ENCODE measurements at regions of chr12 and their contacts with region 1.

Region 1: DNA sequence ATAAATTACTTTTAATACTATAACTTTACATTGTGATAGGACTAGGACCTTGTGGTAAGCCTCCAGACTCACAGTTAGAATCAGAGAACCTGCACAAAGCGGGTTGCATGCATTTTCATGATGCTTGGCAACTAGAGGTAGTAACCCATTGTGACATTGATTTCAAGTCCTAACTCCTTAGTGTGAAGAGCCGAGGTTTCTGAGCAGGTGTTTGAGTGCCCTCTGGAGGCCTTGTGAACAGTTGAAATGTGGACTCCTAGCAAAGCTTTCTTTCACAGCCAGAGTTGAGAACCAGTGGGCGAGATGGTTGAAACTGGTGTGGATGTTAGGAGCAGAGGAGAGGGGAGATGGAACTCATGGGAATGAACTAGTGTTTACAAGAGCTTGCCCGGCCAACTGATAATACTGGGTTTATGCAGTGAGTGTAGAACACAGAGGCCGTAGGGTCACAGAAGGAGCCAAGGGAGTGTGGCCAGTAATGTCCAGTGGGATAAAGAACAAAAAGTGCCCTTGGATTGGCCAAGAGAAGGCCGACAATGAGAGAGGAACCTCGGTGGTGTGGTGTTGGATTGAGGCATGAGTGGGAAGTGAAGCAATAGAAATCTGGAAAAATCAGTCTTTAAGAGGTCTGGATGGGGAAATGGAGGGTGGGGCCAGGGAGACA is 10.9 kb downstream of the ZNF664 start:
- DNase-seq: peak; percentile 41
- H3K4me3 ChIP-seq: no peak overlapping the region
- H3K27ac ChIP-seq: no peak overlapping the region
- H3K4me1 ChIP-seq: peaks cover 0 to 8% of the 10 kb centered on the region in 2 experiments; a peak in 1 of 4 replicates
- H3K27me3 ChIP-seq: no peaks in the 10 kb centered on the region
- CTCF ChIP-seq: peak; percentile 71
- EP300 ChIP-seq: no peak
- RAD21 ChIP-seq: peak; percentile 84

Region 2: DNA sequence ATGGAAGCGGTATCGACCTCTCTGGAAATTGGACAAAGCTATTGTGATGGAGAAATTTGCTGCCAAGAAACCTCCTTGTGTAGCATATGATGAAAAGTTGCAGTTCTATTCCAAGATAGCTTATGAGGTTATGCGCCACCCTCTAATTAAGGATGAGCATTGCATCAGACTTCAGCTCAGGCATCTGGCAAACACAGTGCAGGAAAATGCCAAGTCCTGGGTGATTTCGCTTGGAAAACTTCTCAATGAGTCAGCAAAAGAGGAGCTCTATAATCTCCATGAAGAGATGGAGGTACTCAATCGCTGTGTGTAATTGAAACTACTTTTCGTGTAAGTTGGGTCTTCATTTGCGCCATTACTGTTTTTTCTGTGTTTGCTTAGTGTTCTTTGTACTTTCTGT is 170.6 kb before region 1 on chr12:
- CTCF ChIA-PET with region 1: no interaction called
- POLR2A ChIA-PET with region 1: no interaction called
- DNase-seq: no peak
- H3K4me3 ChIP-seq: no peak overlapping the region
- H3K27ac ChIP-seq: no peak overlapping the region
- H3K4me1 ChIP-seq: no peaks in the 10 kb centered on the region
- H3K27me3 ChIP-seq: no peaks in the 10 kb centered on the region
- CTCF ChIP-seq: no peak
- EP300 ChIP-seq: no peak
- RAD21 ChIP-seq: no peak

Region 3: GRCh38 chr12:123839826-123840225 is 144.1 kb before region 1 on chr12:
- CTCF ChIA-PET with region 1: no interaction called
- POLR2A ChIA-PET with region 1: no interaction called
- DNase-seq: peak; percentile 80
- H3K4me3 ChIP-seq: no peak overlapping the region
- H3K27ac ChIP-seq: peak overlapping the region in 1 of 2 experiments; percentile 11; a peak in 1 of 4 replicates
- H3K4me1 ChIP-seq: no peaks in the 10 kb centered on the region
- H3K27me3 ChIP-seq: no peaks in the 10 kb centered on the region
- CTCF ChIP-seq: no peak
- EP300 ChIP-seq: peak in 1 of 2 experiments; percentile 76; a peak in 2 of 4 replicates
- RAD21 ChIP-seq: peak; percentile 10; the same call in 1 of the 2 replicates

Region 4: GRCh38 chr12:123905319-123905925 is 78.5 kb before region 1 on chr12:
- CTCF ChIA-PET with region 1: interaction called, 21 read pairs
- POLR2A ChIA-PET with region 1: no interaction called
- DNase-seq: peak; percentile 74
- H3K4me3 ChIP-seq: no peak overlapping the region
- H3K27ac ChIP-seq: no peak overlapping the region
- H3K4me1 ChIP-seq: peaks cover 0 to 6% of the 10 kb centered on the region in 2 experiments; a peak in 1 of 4 replicates
- H3K27me3 ChIP-seq: no peaks in the 10 kb centered on the region
- CTCF ChIP-seq: peak; percentile 78
- EP300 ChIP-seq: no peak
- RAD21 ChIP-seq: peak; percentile 57

Region 5: DNA sequence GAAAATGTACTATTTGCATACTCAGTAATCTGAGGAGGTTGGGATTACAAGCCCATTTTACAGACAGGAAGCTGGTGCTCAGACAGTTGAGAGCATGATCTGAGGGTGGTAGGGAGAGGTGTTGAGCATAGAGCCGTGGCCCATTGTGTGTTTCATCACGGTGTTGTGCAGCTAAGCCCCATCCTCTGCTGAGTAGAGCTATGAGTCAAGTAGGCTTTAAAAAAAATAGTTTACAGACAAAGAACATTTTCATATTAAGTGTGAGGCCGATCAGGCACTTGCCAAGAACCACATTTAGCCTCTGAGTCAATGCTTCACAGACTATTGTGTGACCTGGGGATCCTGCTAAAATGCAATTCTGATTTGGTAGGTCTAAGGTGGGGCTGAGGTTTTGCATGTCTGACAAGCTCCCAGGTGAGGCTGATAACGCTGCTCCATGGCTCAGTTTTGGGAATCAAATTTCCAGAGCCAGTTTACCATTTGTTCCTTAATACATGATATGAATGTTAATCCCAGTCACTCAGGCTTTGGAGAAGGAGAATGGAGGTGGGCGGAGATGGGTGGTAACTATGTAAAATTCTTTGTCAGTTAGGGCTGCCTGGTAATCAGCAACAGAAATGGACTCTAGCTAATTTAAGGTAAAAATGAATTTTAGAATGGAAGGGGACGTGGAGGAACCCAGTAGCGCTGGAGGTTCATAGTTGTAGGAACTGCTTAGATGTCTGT is 11.2 kb after region 1 on chr12:
- CTCF ChIA-PET with region 1: interaction called, 24 read pairs
- POLR2A ChIA-PET with region 1: no interaction called
- DNase-seq: no peak
- H3K4me3 ChIP-seq: no peak overlapping the region
- H3K27ac ChIP-seq: no peak overlapping the region
- H3K4me1 ChIP-seq: peaks cover 15 to 25% of the 10 kb centered on the region in 2 experiments; a peak in 2 of 4 replicates
- H3K27me3 ChIP-seq: no peaks in the 10 kb centered on the region
- CTCF ChIP-seq: no peak
- EP300 ChIP-seq: no peak
- RAD21 ChIP-seq: no peak

Region 6: GRCh38 chr12:124109751-124110150 is 125.8 kb after region 1 on chr12:
- CTCF ChIA-PET with region 1: no interaction called
- POLR2A ChIA-PET with region 1: no interaction called
- DNase-seq: peak; percentile 57
- H3K4me3 ChIP-seq: no peak overlapping the region
- H3K27ac ChIP-seq: no peak overlapping the region
- H3K4me1 ChIP-seq: no peaks in the 10 kb centered on the region; a peak in 1 of 4 replicates
- H3K27me3 ChIP-seq: no peaks in the 10 kb centered on the region
- CTCF ChIP-seq: no peak
- EP300 ChIP-seq: no peak
- RAD21 ChIP-seq: no peak